ENCODE measurements at regions of chr16 and their contacts with region 1.

Region 1: DNA sequence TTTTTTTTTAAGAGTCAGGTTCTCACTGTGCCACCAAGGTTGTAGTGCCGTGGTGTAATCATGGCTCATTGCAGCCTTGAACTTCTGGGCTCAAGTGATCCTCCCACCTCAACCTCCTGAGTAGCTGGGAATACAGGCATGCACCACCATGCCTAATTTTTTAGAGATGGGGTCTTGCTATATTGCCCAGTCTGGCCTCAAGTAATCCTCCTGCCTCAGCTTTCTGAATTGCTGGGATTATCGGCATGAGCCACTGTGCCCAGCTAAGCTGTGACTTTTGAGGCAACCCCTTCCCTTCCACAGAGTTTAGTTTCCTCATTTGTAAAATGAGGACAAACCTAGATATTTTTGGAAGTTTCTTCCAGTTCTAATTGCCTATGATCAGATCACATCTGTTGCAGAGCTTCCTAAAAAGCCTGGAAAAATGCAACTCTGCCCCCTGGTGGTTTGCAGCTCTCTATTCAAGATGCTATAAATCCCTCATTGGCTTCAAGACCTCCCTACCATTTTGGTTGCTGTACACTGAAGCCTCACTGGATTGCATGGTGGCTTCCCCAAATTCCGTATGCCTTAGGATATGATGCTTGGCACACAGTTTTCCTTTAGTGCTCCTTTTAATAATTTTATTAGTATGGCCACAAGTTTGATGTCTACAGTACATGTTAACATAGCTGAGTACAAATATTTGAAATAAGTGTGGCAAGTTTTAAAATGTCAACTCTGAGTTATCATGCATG is 19.3 kb downstream of the GDE1 start:
- DNase-seq: peak; percentile 78
- ATAC-seq: peak; percentile 64 to 77

Region 2: DNA sequence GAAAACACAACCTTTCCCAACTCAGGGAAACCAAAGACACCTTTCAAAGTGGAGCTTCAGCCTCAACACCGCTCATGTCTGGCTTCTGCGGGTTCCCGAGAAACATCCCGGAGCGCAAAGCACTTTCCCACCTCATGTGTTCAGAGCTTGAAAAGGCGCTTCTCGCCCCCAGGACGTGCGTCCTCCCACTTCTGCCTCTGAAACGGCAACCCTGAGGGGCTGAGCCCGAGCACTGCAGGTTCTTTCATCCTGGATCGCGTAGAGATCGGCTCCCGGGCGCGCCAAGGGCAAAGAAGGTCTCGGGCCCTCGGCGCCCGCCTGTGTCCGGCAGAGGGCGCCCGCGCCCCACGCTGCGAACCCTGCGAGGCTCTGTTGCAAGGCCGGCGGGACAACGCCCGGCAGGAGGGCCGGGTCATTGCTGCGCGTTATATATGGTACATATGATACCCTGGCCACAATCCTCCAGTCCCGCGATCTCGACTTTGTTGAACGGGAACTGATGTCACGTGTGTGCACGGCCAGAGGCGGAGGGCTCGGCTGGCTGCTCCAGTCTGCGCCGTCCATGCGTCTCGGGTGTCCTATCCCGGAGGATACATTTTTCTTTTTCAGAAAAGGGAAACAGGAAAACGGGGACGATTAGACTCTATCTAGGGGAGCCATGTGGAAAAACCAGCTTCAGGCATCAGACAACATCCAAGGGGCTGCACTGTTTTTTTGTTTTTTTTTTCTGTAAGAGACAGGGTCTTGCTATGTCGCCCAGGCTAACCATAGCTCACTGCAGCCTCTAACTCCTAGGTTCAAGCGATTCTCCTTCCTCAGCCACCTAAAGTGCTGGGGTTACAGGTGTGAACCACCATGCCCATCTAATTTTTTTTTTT is 416.0 kb before region 1 on chr16:
- intact Hi-C with region 1: loop called in 1 of 2 experiments (anchors 5 kb)
- DNase-seq: peak; percentile 86
- ATAC-seq: peak; percentile 96 to 98

Measured in left cardiac atrium (tissue), 4 donors.